CD4-positive, alpha-beta T cell (primary cell): ENCODE measurements at regions of chr6 and their contacts with region 1.

Region 1: GRCh38 chr6:12576389-12576788 is 140.2 kb upstream of the PHACTR1 start:
- DNase-seq: no peak
- ATAC-seq: no peak
- H3K4me3 ChIP-seq: no peak overlapping the region
- H3K4me3 Mint-ChIP-seq: no peak overlapping the region
- H3K27ac ChIP-seq: no peak overlapping the region
- H3K27ac Mint-ChIP-seq: no peak overlapping the region
- H3K4me1 ChIP-seq: no peaks in the 10 kb centered on the region
- H3K4me1 Mint-ChIP-seq: no peaks in the 10 kb centered on the region
- H3K27me3 ChIP-seq: no peaks in the 10 kb centered on the region
- H3K27me3 Mint-ChIP-seq: peaks cover 3% of the 10 kb centered on the region
- CTCF ChIP-seq: no peak

Region 2: GRCh38 chr6:12309070-12309469 is 267.3 kb before region 1 on chr6:
- CTCF ChIA-PET with region 1: no interaction called
- POLR2A ChIA-PET with region 1: no interaction called
- intact Hi-C with region 1: loop called in 1 of 2 experiments (anchors 5 kb)
- DNase-seq: no peak
- ATAC-seq: no peak
- H3K4me3 ChIP-seq: no peak overlapping the region
- H3K4me3 Mint-ChIP-seq: no peak overlapping the region
- H3K27ac ChIP-seq: no peak overlapping the region
- H3K27ac Mint-ChIP-seq: no peak overlapping the region
- H3K4me1 ChIP-seq: no peaks in the 10 kb centered on the region
- H3K4me1 Mint-ChIP-seq: no peaks in the 10 kb centered on the region
- H3K27me3 ChIP-seq: peaks cover 0 to 5% of the 10 kb centered on the region in 2 experiments
- H3K27me3 Mint-ChIP-seq: peaks cover 5% of the 10 kb centered on the region
- CTCF ChIP-seq: no peak

Region 3: DNA sequence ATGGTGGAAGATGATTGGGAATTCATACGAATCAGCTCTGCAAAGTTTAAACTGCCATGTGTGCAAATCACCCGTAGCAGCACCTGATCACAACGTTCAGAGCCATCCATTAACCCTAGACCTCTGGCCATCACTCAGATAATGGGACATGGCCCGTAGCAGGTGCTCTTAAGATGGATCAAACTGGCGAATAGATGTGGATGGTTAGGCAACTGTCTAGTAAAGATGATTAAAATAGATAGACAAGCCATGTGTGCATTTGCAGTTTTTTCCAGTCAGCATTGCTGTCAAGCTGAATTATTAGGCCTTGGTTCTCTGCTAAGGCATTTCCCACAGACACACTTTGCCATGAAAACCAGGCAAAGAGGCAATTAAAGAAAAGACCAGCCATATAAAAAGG is 99.5 kb after region 1 on chr6:
- CTCF ChIA-PET with region 1: no interaction called
- POLR2A ChIA-PET with region 1: no interaction called
- intact Hi-C with region 1: no loop called
- DNase-seq: no peak
- ATAC-seq: no peak
- H3K4me3 ChIP-seq: no peak overlapping the region
- H3K4me3 Mint-ChIP-seq: no peak overlapping the region
- H3K27ac ChIP-seq: no peak overlapping the region
- H3K27ac Mint-ChIP-seq: no peak overlapping the region
- H3K4me1 ChIP-seq: no peaks in the 10 kb centered on the region
- H3K4me1 Mint-ChIP-seq: no peaks in the 10 kb centered on the region
- H3K27me3 ChIP-seq: peaks cover 0 to 4% of the 10 kb centered on the region in 2 experiments
- H3K27me3 Mint-ChIP-seq: peaks cover 16% of the 10 kb centered on the region
- CTCF ChIP-seq: no peak

Region 4: GRCh38 chr6:12698298-12698697 is 121.9 kb after region 1 on chr6:
- CTCF ChIA-PET with region 1: no interaction called
- POLR2A ChIA-PET with region 1: no interaction called
- intact Hi-C with region 1: no loop called
- DNase-seq: no peak
- ATAC-seq: no peak
- H3K4me3 ChIP-seq: no peak overlapping the region
- H3K4me3 Mint-ChIP-seq: no peak overlapping the region
- H3K27ac ChIP-seq: no peak overlapping the region
- H3K27ac Mint-ChIP-seq: no peak overlapping the region
- H3K4me1 ChIP-seq: no peaks in the 10 kb centered on the region
- H3K4me1 Mint-ChIP-seq: no peaks in the 10 kb centered on the region
- H3K27me3 ChIP-seq: peaks cover 0 to 4% of the 10 kb centered on the region in 2 experiments
- H3K27me3 Mint-ChIP-seq: peaks cover 20% of the 10 kb centered on the region
- CTCF ChIP-seq: no peak

Region 5: GRCh38 chr6:13068586-13069210 is 492.3 kb after region 1 on chr6:
- CTCF ChIA-PET with region 1: no interaction called
- POLR2A ChIA-PET with region 1: no interaction called
- intact Hi-C with region 1: no loop called
- DNase-seq: no peak
- ATAC-seq: no peak
- H3K4me3 ChIP-seq: no peak overlapping the region
- H3K4me3 Mint-ChIP-seq: no peak overlapping the region
- H3K27ac ChIP-seq: no peak overlapping the region
- H3K27ac Mint-ChIP-seq: no peak overlapping the region
- H3K4me1 ChIP-seq: no peaks in the 10 kb centered on the region
- H3K4me1 Mint-ChIP-seq: peaks cover 5% of the 10 kb centered on the region
- H3K27me3 ChIP-seq: peaks cover 3 to 4% of the 10 kb centered on the region in 2 experiments
- H3K27me3 Mint-ChIP-seq: peaks cover 5% of the 10 kb centered on the region
- CTCF ChIP-seq: no peak